Left cardiac atrium (tissue), 4 donors: ENCODE measurements at regions of chr7 and their contacts with region 1.

Region 1: DNA sequence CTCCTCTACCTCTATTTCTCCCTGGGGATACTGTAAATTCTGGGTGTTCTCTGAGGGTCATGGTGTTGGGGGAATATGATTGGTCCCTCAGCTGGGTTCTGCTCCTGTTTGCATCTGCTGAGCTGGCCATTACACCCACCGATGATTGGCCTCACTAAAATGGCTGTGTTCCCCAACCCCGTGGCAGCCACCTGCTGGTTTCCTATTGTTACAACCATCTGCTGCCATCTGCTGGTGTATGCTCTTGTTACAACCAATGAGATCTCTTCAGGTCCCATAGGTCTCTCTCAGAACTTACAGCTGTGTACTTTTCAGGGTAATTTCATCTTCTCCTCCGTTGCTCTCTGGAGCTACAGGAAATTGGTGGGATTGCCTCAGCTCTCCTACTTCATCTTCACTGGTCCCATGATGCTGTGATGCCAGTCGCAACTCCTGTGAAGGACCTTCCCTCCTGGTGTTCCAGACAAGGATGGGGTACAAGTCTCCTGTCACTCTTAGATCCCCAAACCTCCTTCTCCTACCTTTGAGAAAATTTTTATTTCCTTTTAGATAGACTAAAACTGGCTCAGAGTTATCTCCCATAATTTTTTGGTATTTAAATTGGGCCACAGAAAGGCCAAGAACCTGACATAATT is 303.5 kb upstream of the SMIM30 start:
- DNase-seq: peak; percentile 85
- ATAC-seq: peak; percentile 88 to 89

Region 2: DNA sequence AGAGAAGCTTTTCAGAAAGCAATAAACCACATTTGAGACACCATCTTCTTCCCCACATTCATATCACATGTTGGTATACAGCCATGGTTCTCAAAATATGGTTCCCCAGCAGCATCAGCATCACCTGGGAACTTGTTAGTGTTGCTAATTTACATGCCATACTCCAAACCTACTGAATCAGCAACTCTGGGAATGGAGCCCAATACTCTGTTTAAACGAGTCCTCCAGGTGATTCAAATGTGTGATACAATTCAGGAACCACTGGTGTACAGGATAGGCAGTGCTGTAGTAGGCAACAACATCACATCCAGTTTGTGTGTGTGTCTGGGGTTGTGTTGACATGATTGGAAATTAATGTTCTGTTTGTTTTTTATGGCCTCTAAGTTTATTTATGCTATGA is 1167.7 kb before region 1 on chr7:
- intact Hi-C with region 1: no loop called
- DNase-seq: no peak
- ATAC-seq: peak in 1 of 2 donors; percentile 21

Region 3: DNA sequence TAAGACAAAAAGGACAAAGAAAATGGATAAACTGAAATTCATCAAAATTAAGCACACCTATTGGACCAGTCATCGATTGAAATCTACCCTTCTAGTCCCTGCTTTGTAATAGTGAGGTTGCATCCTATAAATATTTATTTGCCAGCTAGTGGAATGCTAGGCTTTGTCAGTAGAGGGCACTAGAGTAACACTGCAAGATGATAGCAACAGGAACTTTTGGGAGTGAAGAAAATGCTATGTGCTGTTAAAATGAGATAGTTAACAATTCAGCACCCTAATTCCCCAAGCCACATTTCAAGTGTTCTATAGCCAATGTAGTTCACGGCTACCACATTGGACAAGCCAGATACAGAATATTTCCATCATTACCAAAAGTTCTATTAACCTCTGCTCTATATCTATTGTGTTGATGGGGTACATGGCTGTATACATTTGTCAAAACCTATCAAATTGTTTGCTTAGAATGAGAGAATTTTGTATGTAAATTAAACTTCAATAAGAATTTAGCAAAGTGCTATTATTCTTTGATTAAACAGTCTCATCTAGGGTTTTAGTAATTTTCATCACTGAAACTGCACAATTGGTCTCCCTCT is 871.2 kb before region 1 on chr7:
- intact Hi-C with region 1: loop called in 1 of 2 experiments (anchors 5 kb)
- DNase-seq: no peak
- ATAC-seq: peak; percentile 50 to 57

Region 4: GRCh38 chr7:113159746-113160339 is 262.0 kb before region 1 on chr7:
- intact Hi-C with region 1: loop called in 1 of 2 experiments (anchors 5 kb)
- DNase-seq: no peak
- ATAC-seq: peak in 1 of 2 donors; percentile 34

Region 5: DNA sequence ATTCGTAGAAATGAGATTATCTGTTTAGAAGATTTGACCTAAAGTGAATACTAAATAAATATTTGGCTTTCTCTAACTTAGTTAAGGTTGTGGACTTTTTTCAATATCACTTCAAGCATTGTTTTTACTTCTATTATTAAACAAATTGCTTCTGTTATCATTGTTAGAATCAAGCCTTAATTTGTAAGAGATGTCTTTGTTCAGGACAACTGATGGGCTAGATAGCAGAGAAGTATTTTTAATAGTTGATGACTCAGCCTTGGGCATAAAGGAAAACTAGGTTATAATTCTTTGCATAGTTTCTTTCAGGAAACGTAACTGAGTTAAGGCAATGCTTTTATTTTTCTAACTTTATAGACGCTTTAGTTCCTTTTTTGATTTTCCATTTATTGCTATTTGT is 174.6 kb before region 1 on chr7:
- intact Hi-C with region 1: no loop called
- DNase-seq: no peak
- ATAC-seq: no peak

Region 6: GRCh38 chr7:113331155-113331898 is 90.5 kb before region 1 on chr7:
- intact Hi-C with region 1: no loop called
- DNase-seq: peak; percentile 17
- ATAC-seq: peak in 1 of 2 donors; percentile 53